ENCODE measurements at regions of chr7 and their contacts with region 1.

Region 1: DNA sequence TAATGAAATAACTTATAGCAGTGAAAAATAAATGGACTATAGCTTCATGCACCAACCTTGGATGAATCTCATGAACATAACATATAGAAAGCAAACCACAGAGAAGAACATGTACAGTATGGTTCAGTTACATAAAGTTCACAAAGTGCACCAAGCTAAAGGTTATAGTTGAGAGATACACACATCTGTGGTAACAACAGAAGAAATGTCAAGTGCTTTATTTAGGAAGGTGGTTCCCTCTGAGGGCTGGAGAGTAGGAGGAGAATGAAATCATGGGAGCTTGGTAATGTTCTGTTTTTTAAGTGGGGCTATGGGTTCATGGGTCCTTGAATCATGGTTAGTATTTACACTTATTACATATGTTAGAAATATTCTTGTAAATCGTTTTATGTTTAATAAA is 323.3 kb downstream of the PHTF2 start:
- DNase-seq: no peak
- H3K4me3 ChIP-seq: no peak overlapping the region
- H3K27ac ChIP-seq: no peak overlapping the region
- H3K4me1 ChIP-seq: no peaks in the 10 kb centered on the region
- H3K27me3 ChIP-seq: no peaks in the 10 kb centered on the region
- CTCF ChIP-seq: no peak
- EP300 ChIP-seq: no peak
- RAD21 ChIP-seq: no peak

Region 2: GRCh38 chr7:78134256-78134655 is 12.4 kb after region 1 on chr7:
- CTCF ChIA-PET with region 1: interaction called, 14 read pairs
- POLR2A ChIA-PET with region 1: no interaction called
- DNase-seq: peak; percentile 75
- H3K4me3 ChIP-seq: no peak overlapping the region
- H3K27ac ChIP-seq: no peak overlapping the region
- H3K4me1 ChIP-seq: peaks cover 9 to 10% of the 10 kb centered on the region in 2 experiments
- H3K27me3 ChIP-seq: no peaks in the 10 kb centered on the region
- CTCF ChIP-seq: peak; percentile 96
- EP300 ChIP-seq: peak in 1 of 2 experiments; percentile 34; a peak in 1 of 4 replicates
- RAD21 ChIP-seq: peak; percentile 87

Measured in SK-N-SH (cell line).